ENCODE measurements at regions of chr11 and their contacts with region 1.

Region 1: GRCh38 chr11:19951558-19952115 is 208.6 kb downstream of the DBX1 start:
- DNase-seq: no peak
- ATAC-seq: peak; percentile 51
- H3K4me3 Mint-ChIP-seq: no peak overlapping the region
- H3K27ac Mint-ChIP-seq: no peak overlapping the region
- H3K4me1 Mint-ChIP-seq: peaks cover 8% of the 10 kb centered on the region
- H3K27me3 Mint-ChIP-seq: peaks cover 23% of the 10 kb centered on the region
- CTCF ChIP-seq: peak; percentile 61

Region 2: DNA sequence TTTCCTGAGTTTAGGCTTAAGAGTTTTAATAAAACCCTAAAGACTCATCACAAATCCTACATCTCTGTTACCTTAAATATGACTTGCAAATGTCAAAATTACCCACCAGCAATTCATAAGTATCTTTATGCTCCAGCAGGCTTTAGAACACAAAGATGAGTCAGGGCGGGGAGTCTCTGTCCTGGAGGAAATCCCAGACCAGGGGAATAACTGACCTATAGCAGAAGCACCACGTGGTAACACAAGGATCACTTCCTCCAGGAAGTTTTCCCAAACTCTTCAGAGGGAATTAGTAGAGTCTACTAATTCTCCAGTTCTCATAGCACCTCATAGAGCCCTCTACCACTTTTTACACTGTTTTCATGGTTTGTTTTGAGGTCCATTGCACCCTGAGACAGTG is 22.0 kb before region 1 on chr11:
- CTCF ChIA-PET with region 1: no interaction called
- POLR2A ChIA-PET with region 1: no interaction called
- intact Hi-C with region 1: no loop called
- DNase-seq: no peak
- ATAC-seq: no peak
- H3K4me3 Mint-ChIP-seq: no peak overlapping the region
- H3K27ac Mint-ChIP-seq: no peak overlapping the region
- H3K4me1 Mint-ChIP-seq: no peaks in the 10 kb centered on the region
- H3K27me3 Mint-ChIP-seq: peaks cover 3% of the 10 kb centered on the region
- CTCF ChIP-seq: no peak

Region 3: DNA sequence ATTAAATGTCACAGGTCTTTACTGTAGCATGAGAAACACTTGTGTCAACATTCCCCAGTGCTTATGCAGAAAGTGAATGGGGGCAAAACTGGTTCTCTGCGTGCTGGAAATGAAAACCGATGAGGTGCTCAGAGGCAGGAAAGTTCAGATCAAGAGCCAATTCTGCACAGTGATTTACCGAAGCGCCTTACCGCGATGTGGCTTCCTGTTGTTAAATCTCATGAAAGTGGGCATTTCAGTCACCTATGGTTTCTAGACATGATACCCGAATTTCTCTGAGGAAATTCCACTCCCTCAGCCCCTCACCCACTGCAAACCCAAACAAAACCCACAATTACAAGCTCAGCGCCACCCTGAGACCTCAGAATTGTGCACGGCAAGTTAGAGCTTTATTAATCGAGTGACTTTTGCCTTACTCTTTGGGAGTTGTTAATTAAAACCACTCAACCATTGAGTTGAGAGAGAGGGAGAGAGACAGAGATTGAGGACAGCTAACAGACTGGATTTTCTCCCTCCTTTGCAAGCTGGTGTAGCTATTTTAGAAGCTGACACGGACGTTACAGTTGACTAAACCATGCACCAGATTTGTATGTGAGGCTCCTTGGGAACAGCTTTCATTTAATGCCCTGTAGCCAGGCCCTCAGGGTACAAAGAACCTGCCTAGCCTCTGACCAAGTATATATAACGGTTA is 12.2 kb after region 1 on chr11:
- CTCF ChIA-PET with region 1: interaction called, 11 read pairs
- POLR2A ChIA-PET with region 1: no interaction called
- intact Hi-C with region 1: no loop called
- DNase-seq: peak; percentile 58
- ATAC-seq: peak; percentile 66
- H3K4me3 Mint-ChIP-seq: no peak overlapping the region
- H3K27ac Mint-ChIP-seq: no peak overlapping the region
- H3K4me1 Mint-ChIP-seq: peaks cover 11% of the 10 kb centered on the region
- H3K27me3 Mint-ChIP-seq: peaks cover 9% of the 10 kb centered on the region
- CTCF ChIP-seq: no peak

Region 4: GRCh38 chr11:20110908-20111669 is 159.5 kb after region 1 on chr11:
- CTCF ChIA-PET with region 1: interaction called, 34 read pairs
- POLR2A ChIA-PET with region 1: no interaction called
- intact Hi-C with region 1: loop called (anchors 5 kb)
- DNase-seq: peak; percentile 66
- ATAC-seq: peak; percentile 90
- H3K4me3 Mint-ChIP-seq: no peak overlapping the region
- H3K27ac Mint-ChIP-seq: no peak overlapping the region
- H3K4me1 Mint-ChIP-seq: no peaks in the 10 kb centered on the region
- H3K27me3 Mint-ChIP-seq: peaks cover 6% of the 10 kb centered on the region
- CTCF ChIP-seq: peak; percentile 89